H1 (cell line): ENCODE measurements at regions of chr11 and their contacts with region 1.

Region 1: DNA sequence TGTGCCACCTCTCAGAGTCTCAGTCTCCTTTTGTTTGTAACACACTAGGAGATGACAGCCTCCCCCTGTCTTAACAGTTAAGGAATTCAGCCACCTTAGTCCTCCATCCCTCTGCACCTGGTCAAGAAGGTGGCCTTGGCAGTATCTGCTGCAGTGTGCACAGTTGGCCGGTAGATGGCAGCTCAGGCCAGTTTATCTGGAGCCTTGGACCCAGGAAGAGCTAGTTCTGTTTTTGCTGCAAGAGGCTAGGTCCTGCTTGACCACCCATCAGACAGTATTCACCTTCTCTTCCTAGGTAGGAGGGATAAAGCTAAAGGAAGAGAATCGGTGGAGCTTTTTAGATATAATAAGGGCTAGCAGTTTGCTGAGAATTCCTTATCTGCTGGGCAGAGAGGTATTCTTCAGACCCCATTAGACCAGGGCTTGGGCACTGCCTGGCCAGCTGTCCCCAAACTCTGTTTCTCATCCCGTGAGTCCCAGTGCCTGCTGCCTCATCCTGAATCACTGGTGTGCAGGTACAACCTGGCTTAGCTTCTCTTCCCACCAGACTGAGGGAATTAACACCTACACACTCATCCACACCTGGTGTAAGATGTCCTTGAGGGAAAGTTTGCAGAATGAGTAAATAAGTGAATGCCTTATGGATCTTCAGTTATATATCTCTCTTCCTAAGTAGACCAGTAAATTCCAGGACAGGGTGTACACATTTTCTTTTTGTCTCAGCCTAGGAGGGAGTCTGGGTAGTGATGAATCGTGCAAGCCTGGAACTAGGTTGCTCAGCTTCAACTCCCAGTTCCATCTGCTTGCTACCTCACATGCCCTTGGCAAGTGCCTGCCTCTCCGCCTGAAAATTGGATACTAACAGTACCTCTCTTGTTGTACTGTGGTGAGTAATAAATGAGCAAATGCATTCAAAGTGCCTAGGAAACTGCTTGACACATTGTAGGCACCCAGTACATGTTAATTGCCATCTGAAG is 70.8 kb upstream of the NARS2 start:
- DNase-seq: peak; percentile 77 to 95
- H3K4me3 ChIP-seq: no peak overlapping the region
- H3K27ac ChIP-seq: no peak overlapping the region
- H3K4me1 ChIP-seq: no peaks in the 10 kb centered on the region
- H3K27me3 ChIP-seq: no peaks in the 10 kb centered on the region; a peak in 1 of 7 replicates
- CTCF ChIP-seq: peak; percentile 89 to 99 (median 90)
- EP300 ChIP-seq: no peak
- POLR2A ChIP-seq: no peak
- RAD21 ChIP-seq: peak; percentile 96

Region 2: DNA sequence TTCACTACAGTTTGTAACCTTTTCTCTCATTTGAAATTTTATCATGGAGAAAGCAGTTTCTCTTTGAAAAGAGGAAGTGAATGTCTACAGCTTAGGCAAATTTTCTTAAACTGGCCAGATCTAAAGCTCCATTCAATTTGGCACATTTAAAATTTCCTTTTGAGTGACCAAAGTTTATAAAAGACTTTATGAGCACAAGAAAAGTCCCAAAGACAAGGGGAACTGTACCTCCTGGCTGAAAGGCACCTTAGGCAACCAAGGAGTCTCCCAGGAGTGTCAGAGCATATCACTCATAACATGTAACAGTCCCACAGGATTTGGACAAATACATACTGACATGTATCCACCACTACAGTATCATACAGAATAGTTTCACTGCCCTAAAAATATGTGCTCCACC is 112.1 kb before region 1 on chr11:
- CTCF ChIA-PET with region 1: no interaction called
- POLR2A ChIA-PET with region 1: no interaction called
- DNase-seq: no peak
- H3K4me3 ChIP-seq: no peak overlapping the region
- H3K27ac ChIP-seq: no peak overlapping the region
- H3K4me1 ChIP-seq: no peaks in the 10 kb centered on the region
- H3K27me3 ChIP-seq: no peaks in the 10 kb centered on the region
- CTCF ChIP-seq: no peak
- EP300 ChIP-seq: no peak
- POLR2A ChIP-seq: no peak
- RAD21 ChIP-seq: no peak

Region 3: GRCh38 chr11:78688464-78688863 is 43.0 kb after region 1 on chr11:
- CTCF ChIA-PET with region 1: interaction called, 26 read pairs
- POLR2A ChIA-PET with region 1: no interaction called
- DNase-seq: no peak
- H3K4me3 ChIP-seq: peak overlapping the region in 1 of 4 experiments; percentile 22; a peak in 1 of 8 replicates
- H3K27ac ChIP-seq: no peak overlapping the region
- H3K4me1 ChIP-seq: peaks cover 0 to 12% (median 8%) of the 10 kb centered on the region in 4 experiments
- H3K27me3 ChIP-seq: no peaks in the 10 kb centered on the region; a peak in 2 of 7 replicates
- CTCF ChIP-seq: no peak
- EP300 ChIP-seq: no peak
- POLR2A ChIP-seq: no peak
- RAD21 ChIP-seq: no peak

Region 4: GRCh38 chr11:78731027-78731426 is 85.5 kb after region 1 on chr11:
- CTCF ChIA-PET with region 1: interaction called, 314 read pairs
- POLR2A ChIA-PET with region 1: no interaction called
- DNase-seq: no peak
- H3K4me3 ChIP-seq: no peak overlapping the region
- H3K27ac ChIP-seq: no peak overlapping the region
- H3K4me1 ChIP-seq: no peaks in the 10 kb centered on the region; a peak in 1 of 7 replicates
- H3K27me3 ChIP-seq: no peaks in the 10 kb centered on the region
- CTCF ChIP-seq: no peak
- EP300 ChIP-seq: no peak
- POLR2A ChIP-seq: no peak
- RAD21 ChIP-seq: no peak

Region 5: DNA sequence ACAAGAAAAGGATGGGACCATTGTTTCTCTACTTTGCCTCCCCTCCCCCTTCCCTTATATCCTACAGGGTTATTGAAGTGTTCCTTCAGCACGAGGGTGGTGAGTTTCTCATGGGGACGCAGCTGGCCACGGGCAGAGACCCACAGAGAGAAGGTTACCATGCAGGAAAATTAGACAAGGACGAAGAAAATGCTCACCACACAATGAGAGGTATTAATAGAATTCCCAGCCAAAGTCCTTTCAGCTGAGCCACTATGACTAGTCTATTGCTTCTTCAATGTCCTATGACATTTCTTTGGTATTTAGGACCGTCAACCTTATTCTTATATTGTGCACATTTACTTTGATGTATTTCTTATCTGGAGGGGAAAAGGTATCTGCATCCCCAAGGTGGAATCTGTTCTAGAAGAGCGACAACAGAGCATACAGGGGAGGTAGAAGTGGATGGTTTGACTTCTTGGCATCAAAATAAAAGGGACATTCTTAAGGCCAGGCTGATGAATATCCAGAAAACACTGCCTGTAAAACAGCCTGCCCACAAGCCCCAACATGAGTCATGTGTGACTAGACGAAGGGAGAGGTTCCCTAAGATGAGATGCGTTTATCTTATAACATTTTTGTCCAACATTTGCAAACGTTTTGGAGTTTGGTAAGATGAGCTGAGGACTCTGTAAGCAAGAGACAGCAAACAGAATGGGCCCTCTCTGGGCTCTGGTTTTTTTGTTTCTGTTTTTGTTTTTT is 139.0 kb after region 1 on chr11:
- CTCF ChIA-PET with region 1: interaction called, 12 read pairs
- POLR2A ChIA-PET with region 1: no interaction called
- DNase-seq: no peak
- H3K4me3 ChIP-seq: no peak overlapping the region
- H3K27ac ChIP-seq: no peak overlapping the region
- H3K4me1 ChIP-seq: peaks cover 0 to 2% (median 0%) of the 10 kb centered on the region in 4 experiments; a peak in 1 of 7 replicates
- H3K27me3 ChIP-seq: no peaks in the 10 kb centered on the region
- CTCF ChIP-seq: no peak
- EP300 ChIP-seq: no peak
- POLR2A ChIP-seq: no peak
- RAD21 ChIP-seq: no peak

Region 6: GRCh38 chr11:78916759-78917158 is 271.2 kb after region 1 on chr11:
- CTCF ChIA-PET with region 1: interaction called, 13 read pairs
- POLR2A ChIA-PET with region 1: no interaction called
- DNase-seq: no peak
- H3K4me3 ChIP-seq: no peak overlapping the region
- H3K27ac ChIP-seq: no peak overlapping the region
- H3K4me1 ChIP-seq: no peaks in the 10 kb centered on the region
- H3K27me3 ChIP-seq: peaks cover 0 to 1% (median 0%) of the 10 kb centered on the region in 4 experiments; a peak in 2 of 7 replicates
- CTCF ChIP-seq: no peak
- EP300 ChIP-seq: no peak
- POLR2A ChIP-seq: no peak
- RAD21 ChIP-seq: peak in 1 of 2 experiments; percentile 2; a peak in 1 of 4 replicates

Region 7: DNA sequence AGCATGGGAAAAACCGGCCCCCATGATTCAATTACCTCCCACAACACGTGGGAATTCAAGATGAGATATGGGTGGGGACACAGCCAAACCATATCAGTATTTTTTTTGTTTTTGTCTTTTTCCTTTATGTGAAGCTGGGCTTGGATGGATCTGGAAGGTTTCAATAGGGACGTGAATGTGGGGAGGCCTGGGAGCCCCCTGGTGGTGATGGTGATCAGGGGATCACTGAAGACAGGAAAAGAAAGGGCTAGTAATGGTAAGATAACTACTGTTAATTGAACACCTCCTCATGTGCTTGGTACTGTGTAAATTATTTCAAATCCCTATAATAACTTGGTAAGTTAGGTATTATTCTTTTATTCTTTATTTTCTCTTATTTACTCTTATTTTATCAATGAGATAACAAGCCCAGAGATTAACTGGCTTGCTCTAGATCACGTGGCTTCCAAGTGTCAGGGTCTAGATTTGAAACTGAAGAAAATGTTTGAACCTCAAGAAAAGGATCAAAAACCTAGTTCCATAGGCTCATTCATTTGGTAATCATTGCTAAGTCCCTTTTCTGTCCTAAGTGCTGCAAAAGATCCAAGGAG is 431.1 kb after region 1 on chr11:
- CTCF ChIA-PET with region 1: interaction called, 18 read pairs
- POLR2A ChIA-PET with region 1: no interaction called
- DNase-seq: no peak
- H3K4me3 ChIP-seq: no peak overlapping the region
- H3K27ac ChIP-seq: no peak overlapping the region
- H3K4me1 ChIP-seq: peaks cover 2 to 11% (median 4%) of the 10 kb centered on the region in 4 experiments
- H3K27me3 ChIP-seq: no peaks in the 10 kb centered on the region
- CTCF ChIP-seq: peak; percentile 68 to 76 (median 68)
- EP300 ChIP-seq: no peak
- POLR2A ChIP-seq: no peak
- RAD21 ChIP-seq: peak; percentile 60 to 66